ENCODE measurements at regions of chr14 and their contacts with region 1.

Region 1: DNA sequence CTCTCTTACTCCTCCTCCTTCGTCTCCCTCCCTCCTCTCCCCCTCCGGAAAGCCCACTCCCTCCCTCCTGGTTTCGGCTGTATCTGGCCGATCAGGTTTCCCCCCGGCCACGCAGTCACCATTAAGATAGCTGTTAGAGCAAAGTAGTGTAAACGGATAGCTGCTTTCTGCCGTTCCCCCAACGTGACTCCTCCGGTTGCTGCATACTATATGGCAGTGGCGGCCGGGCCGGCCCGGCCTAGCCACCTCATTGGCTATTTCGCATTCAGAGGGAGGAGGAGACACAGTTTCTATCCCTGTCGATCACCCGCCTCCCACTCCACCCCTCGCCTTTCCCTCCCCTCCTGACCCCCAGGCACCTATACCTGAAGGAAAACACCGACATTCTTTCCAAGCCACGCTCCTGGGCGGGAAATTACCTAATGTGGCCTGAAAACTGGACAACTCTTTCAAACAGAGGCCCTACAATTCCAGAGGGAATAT is at the start of gene SIX4:
- DNase-seq: peak; percentile 15
- H3K4me3 Mint-ChIP-seq: peak within 1 kb of the TSS; percentile 78
- H3K27ac Mint-ChIP-seq: no peak within 1 kb of the TSS
- H3K4me1 Mint-ChIP-seq: peaks cover 19% of the 10 kb centered on the region
- H3K27me3 Mint-ChIP-seq: peaks cover 71% of the 10 kb centered on the region
- total RNA-seq, gene SIX4: not detected

Region 2: DNA sequence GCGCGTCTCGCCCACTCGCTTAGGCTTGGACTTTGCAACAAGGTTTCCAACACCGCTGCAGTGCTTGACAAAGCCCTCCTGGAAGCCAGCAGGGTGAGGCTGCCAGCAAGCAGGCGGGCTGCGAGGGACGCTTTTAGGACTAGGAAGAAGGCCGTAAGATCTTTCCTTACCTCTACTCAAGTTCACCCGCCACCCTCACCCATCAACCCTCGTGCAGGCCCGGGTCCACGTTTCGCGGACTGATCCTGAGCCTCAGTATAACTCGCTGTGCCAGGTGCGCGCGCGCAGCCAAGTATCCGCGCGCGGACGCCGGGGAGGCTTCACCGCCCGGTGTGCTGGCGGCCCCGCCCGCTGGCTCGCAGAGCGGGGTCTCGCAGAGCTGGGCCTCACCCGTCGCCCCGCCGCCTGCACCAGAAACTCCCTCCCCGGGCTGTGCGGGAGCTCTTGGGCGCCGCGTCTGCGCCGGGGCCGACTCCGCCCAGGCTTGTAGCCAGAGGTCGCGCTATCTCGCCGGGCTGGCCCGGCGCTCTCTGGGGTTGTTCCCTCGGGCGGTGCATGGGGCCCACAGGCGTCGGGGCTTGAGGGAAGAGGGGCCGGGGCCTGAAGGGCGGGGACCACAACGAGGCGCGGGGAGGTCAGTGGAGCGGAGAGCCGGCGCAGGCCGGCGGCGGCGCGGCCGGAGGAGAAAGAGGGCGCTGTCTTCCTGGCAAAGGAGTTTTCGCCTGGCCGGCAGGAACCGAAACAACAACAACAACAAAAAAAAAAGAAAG is 67.3 kb before region 1 on chr14:
- CTCF ChIA-PET with region 1: no interaction called
- intact Hi-C with region 1: loop called (anchors 2 kb)
- DNase-seq: peak; percentile 39
- H3K4me3 Mint-ChIP-seq: peak overlapping the region; percentile 75
- H3K27ac Mint-ChIP-seq: no peak overlapping the region
- H3K4me1 Mint-ChIP-seq: peaks cover 39% of the 10 kb centered on the region
- H3K27me3 Mint-ChIP-seq: peaks cover 79% of the 10 kb centered on the region

Region 3: GRCh38 chr14:60734465-60735242 is 10.5 kb after region 1 on chr14 and contains the start of gene MNAT1:
- CTCF ChIA-PET with region 1: interaction called, 5 read pairs
- intact Hi-C with region 1: loop called (anchors 1 kb)
- DNase-seq: peak; percentile 83
- H3K4me3 Mint-ChIP-seq: peak within 1 kb of the TSS; percentile 97
- H3K27ac Mint-ChIP-seq: peak within 1 kb of the TSS; percentile 86
- H3K4me1 Mint-ChIP-seq: peaks cover 17% of the 10 kb centered on the region
- H3K27me3 Mint-ChIP-seq: peaks cover 10% of the 10 kb centered on the region
- total RNA-seq, gene MNAT1: 44.0 to 44.2 TPM

Region 4: DNA sequence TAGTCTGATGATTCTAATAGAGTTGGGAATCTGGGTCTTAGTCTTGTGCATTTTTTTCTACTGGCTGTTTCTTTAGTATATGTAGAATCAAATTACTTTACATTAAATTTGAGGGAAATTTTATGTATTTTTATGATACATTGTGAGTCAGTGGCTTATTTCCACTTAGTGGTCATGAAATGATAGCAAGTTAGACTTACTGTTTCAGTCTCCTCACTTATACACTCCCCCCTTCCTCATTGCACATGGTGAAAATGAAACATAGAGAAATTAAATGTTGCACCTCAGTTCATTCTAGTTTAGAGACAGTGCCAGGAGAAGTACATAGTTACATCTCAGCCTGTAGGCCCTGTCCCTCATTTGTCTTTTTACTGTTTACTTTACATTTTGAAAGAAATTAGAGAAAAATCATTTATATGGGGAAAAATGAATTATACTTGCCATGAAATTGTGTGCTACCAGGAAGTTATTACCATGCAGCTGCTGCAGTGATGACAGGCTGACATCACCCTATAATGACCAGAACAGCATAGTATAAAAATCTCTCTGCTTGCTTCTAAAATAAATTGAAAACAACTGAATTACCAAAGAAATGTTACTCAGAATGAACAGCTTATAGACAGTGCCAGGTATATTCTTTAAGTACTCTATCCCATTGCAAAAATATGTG is 143.5 kb after region 1 on chr14:
- CTCF ChIA-PET with region 1: no interaction called
- intact Hi-C with region 1: loop called (anchors 5 kb)
- DNase-seq: no peak
- H3K4me3 Mint-ChIP-seq: no peak overlapping the region
- H3K27ac Mint-ChIP-seq: no peak overlapping the region
- H3K4me1 Mint-ChIP-seq: peaks cover 18% of the 10 kb centered on the region
- H3K27me3 Mint-ChIP-seq: no peaks in the 10 kb centered on the region

Region 5: DNA sequence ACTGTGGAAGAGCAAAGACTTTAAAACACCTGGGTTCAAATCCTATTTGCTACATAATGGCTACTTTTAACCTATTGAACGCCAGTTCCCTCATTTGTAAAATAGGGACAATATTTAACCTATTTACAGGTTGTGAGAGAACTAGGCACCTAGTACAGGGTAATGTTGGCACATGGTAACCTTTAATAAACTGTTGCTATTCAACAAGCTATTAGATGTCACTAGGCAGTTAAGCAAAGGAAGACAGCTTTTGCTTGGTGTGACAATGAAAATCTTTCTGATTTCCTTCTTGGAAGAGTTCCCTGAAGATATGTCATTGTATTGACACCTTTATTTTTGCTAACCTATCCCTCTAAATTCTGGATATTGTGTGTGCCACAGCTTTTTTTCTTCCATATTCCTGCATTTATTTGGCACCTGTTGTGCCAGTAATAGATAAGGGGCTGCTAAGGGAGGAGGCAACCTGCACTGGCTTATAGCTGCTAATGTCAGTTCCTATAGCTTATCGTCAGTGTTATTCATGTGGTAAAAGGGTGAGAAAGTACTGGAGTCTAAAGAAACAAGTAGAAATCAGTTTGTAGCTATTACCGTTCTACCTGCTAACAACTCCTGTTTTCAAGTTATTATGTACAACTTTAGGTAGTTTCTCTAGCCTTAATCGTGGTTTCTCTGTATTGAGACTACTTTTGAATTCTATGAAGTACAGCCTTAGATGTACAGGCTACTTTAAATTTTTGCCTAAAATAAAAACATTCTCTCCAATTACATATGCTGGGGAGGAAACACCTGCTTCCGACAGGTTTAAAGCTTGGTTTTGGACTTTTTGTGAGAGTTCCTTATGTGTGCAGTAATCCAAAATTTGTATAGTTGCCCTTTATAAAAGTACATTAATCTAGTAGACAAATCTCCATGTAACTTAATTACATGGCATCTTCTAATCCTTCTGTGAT is 995.4 kb after region 1 on chr14:
- CTCF ChIA-PET with region 1: no interaction called
- intact Hi-C with region 1: no loop called
- DNase-seq: no peak
- H3K4me3 Mint-ChIP-seq: peak overlapping the region; percentile 46
- H3K27ac Mint-ChIP-seq: peak overlapping the region; percentile 56
- H3K4me1 Mint-ChIP-seq: peaks cover 85% of the 10 kb centered on the region
- H3K27me3 Mint-ChIP-seq: no peaks in the 10 kb centered on the region

Measured in activated naive CD4-positive, alpha-beta T cell treated with anti-CD3 and anti-CD28 coated beads for 36 hours (primary cell).